ENCODE measurements at regions of chr4 and their contacts with region 1.

Region 1: GRCh38 chr4:146916479-146917076 is 29.1 kb downstream of the TTC29 start:
- DNase-seq: peak in 1 of 2 donors; percentile 52
- ATAC-seq: peak in 1 of 3 donors; percentile 49
- H3K4me3 ChIP-seq: no peak overlapping the region
- H3K4me3 Mint-ChIP-seq: no peak overlapping the region
- H3K27ac ChIP-seq: no peak overlapping the region
- H3K27ac Mint-ChIP-seq: no peak overlapping the region
- H3K4me1 ChIP-seq: no peaks in the 10 kb centered on the region
- H3K4me1 Mint-ChIP-seq: no peaks in the 10 kb centered on the region
- H3K27me3 ChIP-seq: no peaks in the 10 kb centered on the region
- H3K27me3 Mint-ChIP-seq: peaks cover 0 to 5% of the 10 kb centered on the region in 2 donors
- CTCF ChIP-seq: peak; percentile 54

Region 2: DNA sequence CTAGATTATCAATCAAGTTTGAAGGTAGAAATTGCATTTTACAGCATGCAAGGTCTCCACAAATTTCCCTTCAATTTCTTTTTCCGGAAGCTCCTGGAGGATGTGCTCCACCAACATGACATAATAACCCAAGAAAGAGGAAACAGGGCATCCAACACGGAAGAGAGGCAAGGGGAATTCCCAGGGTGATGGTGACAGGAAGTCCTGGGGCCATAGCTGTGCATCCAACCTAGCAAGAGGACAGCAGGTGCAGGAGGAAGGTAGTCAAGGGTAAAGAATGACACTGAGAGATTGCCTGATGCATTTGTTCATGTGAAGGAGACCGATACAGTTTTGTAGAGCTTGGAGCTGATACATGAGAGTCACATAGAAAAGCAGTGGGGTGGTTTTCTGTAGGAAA is 856.7 kb before region 1 on chr4:
- intact Hi-C with region 1: no loop called
- DNase-seq: peak in 1 of 2 donors; percentile 14
- ATAC-seq: peak in 1 of 3 donors; percentile 46
- H3K4me3 ChIP-seq: no peak overlapping the region
- H3K4me3 Mint-ChIP-seq: no peak overlapping the region
- H3K27ac ChIP-seq: no peak overlapping the region
- H3K27ac Mint-ChIP-seq: no peak overlapping the region
- H3K4me1 ChIP-seq: peaks cover 3% of the 10 kb centered on the region
- H3K4me1 Mint-ChIP-seq: no peaks in the 10 kb centered on the region
- H3K27me3 ChIP-seq: no peaks in the 10 kb centered on the region
- H3K27me3 Mint-ChIP-seq: peaks cover 13 to 16% of the 10 kb centered on the region in 2 donors
- CTCF ChIP-seq: no peak

Region 3: GRCh38 chr4:146342600-146343192 is 573.9 kb before region 1 on chr4:
- intact Hi-C with region 1: loop called (anchors 5 kb)
- DNase-seq: peak in 1 of 2 donors; percentile 66
- ATAC-seq: peak in 1 of 3 donors; percentile 55
- H3K4me3 ChIP-seq: no peak overlapping the region
- H3K4me3 Mint-ChIP-seq: no peak overlapping the region
- H3K27ac ChIP-seq: no peak overlapping the region
- H3K27ac Mint-ChIP-seq: no peak overlapping the region
- H3K4me1 ChIP-seq: no peaks in the 10 kb centered on the region
- H3K4me1 Mint-ChIP-seq: peaks cover 0 to 17% of the 10 kb centered on the region in 2 donors
- H3K27me3 ChIP-seq: no peaks in the 10 kb centered on the region
- H3K27me3 Mint-ChIP-seq: no peaks in the 10 kb centered on the region
- CTCF ChIP-seq: peak; percentile 81

Region 4: DNA sequence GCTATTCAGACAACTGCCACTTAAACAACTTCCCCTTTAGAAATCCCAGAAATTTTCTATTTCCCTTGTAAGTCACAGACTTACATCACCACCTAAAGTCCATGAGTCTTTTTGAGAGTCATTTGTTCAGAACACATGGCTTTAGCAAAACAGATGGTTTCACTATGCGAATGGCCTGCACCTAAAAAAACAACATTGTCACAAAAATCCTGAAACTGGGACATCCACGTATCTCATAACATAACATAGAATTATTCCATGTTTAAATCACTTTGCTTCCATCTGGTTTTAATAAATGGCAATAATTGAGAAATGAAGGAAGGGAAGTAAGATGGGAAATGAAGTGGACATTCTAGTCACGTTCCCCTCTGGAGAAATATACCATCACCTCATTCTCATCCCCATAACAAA is 409.0 kb after region 1 on chr4:
- intact Hi-C with region 1: no loop called
- DNase-seq: no peak
- ATAC-seq: no peak
- H3K4me3 ChIP-seq: no peak overlapping the region
- H3K4me3 Mint-ChIP-seq: no peak overlapping the region
- H3K27ac ChIP-seq: no peak overlapping the region
- H3K27ac Mint-ChIP-seq: no peak overlapping the region
- H3K4me1 ChIP-seq: no peaks in the 10 kb centered on the region
- H3K4me1 Mint-ChIP-seq: no peaks in the 10 kb centered on the region
- H3K27me3 ChIP-seq: no peaks in the 10 kb centered on the region
- H3K27me3 Mint-ChIP-seq: no peaks in the 10 kb centered on the region
- CTCF ChIP-seq: no peak